KBM-7 (cell line): ENCODE measurements at regions of chr11 and their contacts with region 1.

Region 1: GRCh38 chr11:69918938-69919650 is 99.9 kb upstream of the FGF3 start:
- DNase-seq: peak; percentile 73

Region 2: GRCh38 chr11:70448983-70449567 is 530.0 kb after region 1 on chr11:
- in situ Hi-C with region 1: loop called (anchors 25 kb)
- DNase-seq: peak; percentile 22